ENCODE measurements at regions of chr17 and their contacts with region 1.

Region 1: DNA sequence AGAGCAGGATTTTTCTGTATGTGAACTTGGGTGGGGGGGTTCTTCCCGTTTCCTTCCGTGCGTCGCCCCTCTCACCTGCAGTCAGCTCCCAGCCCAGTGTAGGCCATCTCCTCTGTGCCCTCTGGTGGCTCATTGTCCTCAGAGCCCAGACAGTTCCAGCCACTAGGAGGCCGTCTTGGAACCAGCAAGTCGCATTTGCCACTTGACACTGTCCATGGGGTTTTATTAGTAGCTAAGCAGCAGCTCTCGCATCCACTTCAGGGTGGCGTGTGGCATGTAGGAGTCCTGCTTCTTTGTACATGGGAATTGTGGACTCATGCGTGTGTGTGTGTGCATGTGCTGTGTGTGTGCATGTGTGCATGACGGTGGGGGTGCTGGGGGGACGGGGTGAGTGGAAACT is 74.0 kb downstream of the SEC14L1 start:
- DNase-seq: peak in 7 of 10 donors; percentile 50 to 95 (median 61)

Region 2: DNA sequence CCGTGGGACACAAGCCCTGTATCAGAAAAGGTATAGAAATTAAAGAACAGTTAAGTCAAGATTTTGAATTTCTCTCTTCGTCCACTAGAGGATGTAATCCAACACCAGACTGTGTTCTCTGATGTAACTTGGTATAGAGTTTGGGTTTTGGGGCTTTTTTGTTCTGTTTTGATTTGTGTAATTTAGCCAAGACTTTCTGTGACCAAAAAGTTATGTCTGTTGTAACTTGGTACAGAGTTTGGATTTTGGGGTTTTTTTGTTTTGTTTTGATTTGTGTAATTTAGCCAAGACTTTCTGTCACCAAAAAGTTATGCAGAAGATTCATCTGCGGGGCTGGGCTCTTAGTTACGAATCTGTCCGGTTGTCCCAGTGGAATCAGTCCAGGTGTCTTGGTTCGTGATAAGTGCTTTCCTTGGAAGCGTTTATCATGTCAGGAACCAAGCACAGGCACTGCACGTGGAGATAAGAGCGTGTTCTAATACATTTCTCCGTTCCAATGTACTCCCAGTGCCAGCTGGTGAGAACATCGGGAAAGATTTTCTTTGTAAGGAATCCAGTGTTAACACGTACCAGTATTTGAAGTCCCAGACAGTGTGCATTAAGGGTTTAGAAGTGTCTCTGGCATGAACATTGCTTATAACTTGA is 118.1 kb before region 1 on chr17:
- intact Hi-C with region 1: loop called (anchors 2 kb)
- DNase-seq: no peak